ENCODE measurements at regions of chr15 and their contacts with region 1.

Region 1: GRCh38 chr15:101121511-101122090 is 130.2 kb downstream of the CHSY1 start:
- DNase-seq: peak; percentile 85 to 94 (median 89)
- ATAC-seq: peak; percentile 88 to 94 (median 92)
- H3K4me3 ChIP-seq: peak overlapping the region in 11 of 12 donors; percentile 11 to 56 (median 33)
- H3K27ac ChIP-seq: peak overlapping the region; percentile 21 to 97 (median 68)
- H3K4me1 ChIP-seq: peaks cover 0 to 63% (median 14%) of the 10 kb centered on the region in 12 donors
- H3K27me3 ChIP-seq: no peaks in the 10 kb centered on the region
- CTCF ChIP-seq: peak in 10 of 12 donors; percentile 16 to 60 (median 40)
- POLR2A ChIP-seq: no peak

Region 2: GRCh38 chr15:101153809-101154656 is 32.4 kb after region 1 on chr15:
- intact Hi-C with region 1: no loop called
- DNase-seq: no peak
- ATAC-seq: peak in 1 of 4 donors; percentile 11
- H3K4me3 ChIP-seq: no peak overlapping the region
- H3K27ac ChIP-seq: no peak overlapping the region
- H3K4me1 ChIP-seq: peaks cover 0 to 24% (median 7%) of the 10 kb centered on the region in 12 donors
- H3K27me3 ChIP-seq: no peaks in the 10 kb centered on the region
- CTCF ChIP-seq: no peak
- POLR2A ChIP-seq: no peak

Region 3: DNA sequence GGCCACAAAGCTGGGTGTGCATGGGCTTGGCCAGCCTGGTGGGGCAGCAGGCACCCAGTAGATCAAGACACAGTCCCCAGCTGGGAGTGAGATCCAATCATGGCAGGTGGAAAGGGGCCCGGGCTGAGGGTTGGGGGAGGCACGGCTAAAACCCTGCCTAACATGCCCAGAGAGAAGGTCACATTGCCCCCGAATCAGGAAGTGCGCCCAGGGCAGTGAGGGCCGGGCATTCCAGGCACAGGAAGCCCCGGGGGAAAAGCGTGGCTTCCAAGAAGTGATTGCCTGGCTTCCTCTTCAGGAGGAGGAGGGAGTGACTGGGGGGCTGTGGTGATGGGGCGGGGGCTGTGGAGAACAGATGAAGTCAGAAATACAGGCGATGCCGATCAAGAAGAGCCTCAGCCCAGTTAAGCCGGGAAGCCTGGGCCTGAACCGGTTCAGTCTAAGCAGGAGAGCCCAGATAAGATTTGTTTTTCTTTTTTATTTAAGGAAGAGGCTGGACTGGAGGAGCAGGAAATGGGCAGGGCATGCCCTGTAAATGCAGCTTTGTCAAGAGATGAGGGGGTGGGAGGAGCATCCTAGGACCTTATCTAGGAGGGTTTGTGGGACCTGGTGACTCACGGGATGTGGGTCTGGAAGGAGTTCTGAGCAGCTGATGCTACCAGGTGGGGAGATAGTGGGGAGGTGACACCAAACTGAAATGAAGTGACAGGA is 46.3 kb after region 1 on chr15:
- intact Hi-C with region 1: loop called in 5 of 10 experiments (anchors 5 kb)
- DNase-seq: peak; percentile 77 to 88 (median 83)
- ATAC-seq: peak; percentile 75 to 84 (median 81)
- H3K4me3 ChIP-seq: peak overlapping the region in 6 of 12 donors; percentile 6 to 31 (median 15)
- H3K27ac ChIP-seq: peak overlapping the region; percentile 79 to 99 (median 85)
- H3K4me1 ChIP-seq: peaks cover 0 to 70% (median 23%) of the 10 kb centered on the region in 12 donors
- H3K27me3 ChIP-seq: no peaks in the 10 kb centered on the region
- CTCF ChIP-seq: peak in 1 of 12 donors; percentile 14
- POLR2A ChIP-seq: no peak

Region 4: DNA sequence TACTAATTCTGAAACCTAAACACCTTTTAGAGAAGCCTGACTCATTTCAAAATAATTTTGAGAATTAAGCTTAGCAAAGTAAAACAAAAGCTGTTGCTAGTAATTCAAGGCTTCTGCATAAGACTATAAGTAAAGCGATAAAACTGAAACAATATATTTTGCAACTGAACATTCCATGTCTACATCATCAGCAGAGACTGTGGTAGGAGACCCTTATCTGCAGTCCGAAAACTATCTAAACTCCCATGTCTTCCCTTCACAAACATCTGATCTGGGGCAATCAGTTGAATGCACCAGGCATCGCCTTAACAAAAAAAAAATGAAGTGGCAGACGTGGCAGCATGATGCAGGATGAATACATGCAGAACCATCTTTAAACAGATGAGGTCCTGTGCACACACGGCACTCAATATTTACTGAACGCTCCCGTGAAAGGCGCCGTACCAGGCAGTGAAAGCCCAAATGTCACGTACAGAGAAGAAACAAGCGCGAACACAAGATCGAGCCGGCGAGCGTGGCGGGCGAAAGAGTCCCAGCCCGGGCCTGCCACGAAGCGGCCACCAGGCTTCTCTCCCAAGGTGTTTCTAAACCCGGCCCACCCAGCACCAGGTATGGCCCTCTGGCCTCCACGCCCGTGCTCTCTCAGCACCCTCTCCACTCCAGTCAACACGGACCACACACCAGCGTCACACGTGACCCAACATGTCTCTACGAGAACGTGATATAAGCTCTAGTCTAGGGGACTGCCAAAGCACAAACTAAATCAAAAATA is 67.2 kb after region 1 on chr15:
- intact Hi-C with region 1: loop called in 1 of 10 experiments (anchors 5 kb)
- DNase-seq: peak in 1 of 5 donors; percentile 42
- ATAC-seq: peak in 3 of 4 donors; percentile 14 to 36 (median 30)
- H3K4me3 ChIP-seq: peak overlapping the region in 10 of 12 donors; percentile 4 to 56 (median 43)
- H3K27ac ChIP-seq: peak overlapping the region; percentile 63 to 93 (median 82)
- H3K4me1 ChIP-seq: peaks cover 0 to 96% (median 50%) of the 10 kb centered on the region in 12 donors
- H3K27me3 ChIP-seq: no peaks in the 10 kb centered on the region
- CTCF ChIP-seq: no peak
- POLR2A ChIP-seq: no peak